Transverse colon (tissue), 4 donors: ENCODE measurements at regions of chr4 and their contacts with region 1.

Region 1: DNA sequence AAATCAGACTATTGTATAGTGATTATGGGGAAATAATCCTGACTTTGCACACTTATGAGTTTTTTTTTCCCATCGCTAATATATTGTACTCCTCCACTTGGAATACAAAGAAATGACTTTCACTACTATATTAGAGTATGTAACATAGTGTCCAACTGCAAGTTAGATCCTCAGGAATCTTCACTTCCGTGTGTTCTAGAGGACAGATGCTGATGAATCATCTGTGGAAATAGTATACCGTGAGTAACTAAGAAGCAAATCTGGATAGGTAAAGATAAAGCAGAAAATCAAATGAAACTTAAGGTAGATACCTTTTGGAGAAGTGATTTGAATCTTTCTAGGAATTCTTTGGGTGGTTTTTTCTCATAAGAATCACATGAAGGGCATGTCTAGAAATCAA is 8.3 kb downstream of the IL21 start:
- DNase-seq: no peak
- H3K4me3 ChIP-seq: no peak overlapping the region
- H3K27ac ChIP-seq: no peak overlapping the region
- H3K4me1 ChIP-seq: no peaks in the 10 kb centered on the region
- H3K27me3 ChIP-seq: no peaks in the 10 kb centered on the region
- CTCF ChIP-seq: no peak
- EP300 ChIP-seq: no peak
- POLR2A ChIP-seq: no peak

Region 2: GRCh38 chr4:122669911-122670738 is 57.6 kb after region 1 on chr4:
- in situ Hi-C with region 1: no loop called
- intact Hi-C with region 1: loop called (anchors 2 kb)
- DNase-seq: no peak
- H3K4me3 ChIP-seq: no peak overlapping the region
- H3K27ac ChIP-seq: no peak overlapping the region
- H3K4me1 ChIP-seq: peaks cover 3 to 13% (median 7%) of the 10 kb centered on the region in 4 donors
- H3K27me3 ChIP-seq: no peaks in the 10 kb centered on the region
- CTCF ChIP-seq: no peak
- EP300 ChIP-seq: no peak
- POLR2A ChIP-seq: no peak